Activated CD8-positive, alpha-beta T cell treated with anti-CD3 and anti-CD28 coated beads for 36 hours (primary cell): ENCODE measurements at regions of chr13 and their contacts with region 1.

Region 1: DNA sequence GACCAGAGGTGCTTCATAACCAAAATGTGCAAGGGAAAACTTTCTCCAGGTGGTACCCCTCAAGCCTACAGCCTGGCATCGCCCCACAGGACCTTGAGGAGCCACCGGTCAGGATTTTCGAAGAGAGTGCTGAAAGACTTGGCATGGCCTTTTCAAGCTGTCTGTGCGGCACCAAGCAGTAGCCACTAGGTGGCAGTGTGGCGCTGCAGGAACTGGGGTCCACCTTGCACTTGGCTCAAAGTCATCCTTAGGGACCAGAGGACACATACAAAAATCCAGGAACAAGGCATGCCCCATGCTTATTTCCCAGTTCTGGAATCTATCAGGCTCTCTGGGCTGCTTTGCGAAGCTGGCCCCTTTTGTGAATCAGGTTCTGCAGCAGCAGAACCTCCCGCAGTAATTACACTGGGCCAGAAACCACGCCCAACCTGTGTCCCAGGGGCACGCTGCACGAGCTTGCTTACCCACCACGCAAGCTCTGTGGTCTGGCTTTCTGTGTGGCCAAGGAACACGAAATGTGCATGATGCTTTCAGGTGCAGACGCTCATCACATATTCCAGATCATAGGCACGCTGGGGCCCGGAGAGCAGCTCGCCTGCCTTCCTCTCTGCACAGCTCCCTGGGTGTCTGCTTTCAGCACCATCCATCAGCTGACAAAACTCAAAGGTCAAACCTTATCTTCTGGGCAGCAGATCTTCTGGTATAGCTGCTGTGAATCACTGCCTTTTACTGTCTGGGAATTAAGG is 87.2 kb downstream of the SLC7A1 start:
- DNase-seq: peak; percentile 83
- ATAC-seq: peak; percentile 78
- H3K4me3 Mint-ChIP-seq: no peak overlapping the region
- H3K27ac Mint-ChIP-seq: no peak overlapping the region
- H3K4me1 Mint-ChIP-seq: no peaks in the 10 kb centered on the region
- H3K27me3 Mint-ChIP-seq: peaks cover 2% of the 10 kb centered on the region
- CTCF ChIP-seq: peak; percentile 92

Region 2: GRCh38 chr13:29496240-29496712 is 12.0 kb before region 1 on chr13:
- CTCF ChIA-PET with region 1: interaction called, 42 read pairs
- POLR2A ChIA-PET with region 1: interaction called, 3 read pairs
- intact Hi-C with region 1: no loop called
- DNase-seq: no peak
- ATAC-seq: peak; percentile 30
- H3K4me3 Mint-ChIP-seq: no peak overlapping the region
- H3K27ac Mint-ChIP-seq: no peak overlapping the region
- H3K4me1 Mint-ChIP-seq: peaks cover 3% of the 10 kb centered on the region
- H3K27me3 Mint-ChIP-seq: peaks cover 13% of the 10 kb centered on the region
- CTCF ChIP-seq: no peak

Region 3: DNA sequence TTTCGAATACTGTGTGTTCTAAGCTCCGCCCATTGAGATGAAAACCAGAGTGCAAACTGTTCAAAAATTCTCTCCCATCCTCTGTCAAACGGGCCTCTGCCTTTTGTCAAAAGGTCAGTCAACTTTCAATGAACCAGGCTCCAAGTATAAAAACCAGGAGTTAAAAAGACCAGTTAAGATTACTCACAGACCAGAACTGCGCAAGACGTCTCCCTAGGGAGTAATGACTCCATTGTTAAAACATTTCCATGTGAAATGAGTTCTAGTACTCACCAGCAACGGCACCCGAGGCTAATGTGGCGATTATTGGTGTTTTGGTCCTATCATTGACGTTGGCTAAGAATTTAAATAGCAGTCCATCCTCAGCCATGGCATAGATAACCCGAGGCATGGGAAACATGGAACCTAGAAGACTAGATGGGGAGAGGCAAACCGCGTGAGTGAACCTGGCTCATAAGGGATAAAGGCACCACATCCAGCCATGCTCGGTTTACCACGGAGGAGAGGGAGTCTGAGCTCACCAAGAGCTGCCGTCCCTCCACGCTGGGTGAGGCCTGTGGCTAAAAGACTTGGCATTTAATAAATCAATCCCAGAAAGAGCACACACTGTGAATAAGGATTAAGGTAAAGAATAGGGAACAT is 13.9 kb after region 1 on chr13:
- CTCF ChIA-PET with region 1: interaction called, 34 read pairs
- POLR2A ChIA-PET with region 1: no interaction called
- intact Hi-C with region 1: no loop called
- DNase-seq: no peak
- ATAC-seq: no peak
- H3K4me3 Mint-ChIP-seq: no peak overlapping the region
- H3K27ac Mint-ChIP-seq: no peak overlapping the region
- H3K4me1 Mint-ChIP-seq: no peaks in the 10 kb centered on the region
- H3K27me3 Mint-ChIP-seq: no peaks in the 10 kb centered on the region
- CTCF ChIP-seq: no peak

Region 4: DNA sequence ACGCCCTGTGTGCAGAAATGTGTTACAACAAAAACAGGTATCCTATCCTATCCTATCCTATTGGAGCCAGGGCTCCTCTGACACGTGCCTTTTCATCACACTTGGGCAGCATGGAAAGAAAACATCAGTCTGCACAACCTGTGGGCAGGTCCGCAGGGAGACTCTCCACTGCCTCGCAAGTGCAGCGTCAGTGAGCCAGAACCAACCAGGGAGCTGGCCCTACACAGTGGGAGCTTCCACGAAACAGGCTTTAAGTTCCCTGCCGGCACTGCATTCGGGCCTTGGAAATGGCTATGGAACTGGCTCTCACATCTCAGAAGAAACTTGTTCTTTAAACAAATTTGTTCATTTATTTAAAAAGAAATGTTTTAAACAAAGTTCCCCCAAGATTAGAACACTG is 37.7 kb after region 1 on chr13:
- CTCF ChIA-PET with region 1: interaction called, 10 read pairs
- POLR2A ChIA-PET with region 1: no interaction called
- intact Hi-C with region 1: no loop called
- DNase-seq: no peak
- ATAC-seq: no peak
- H3K4me3 Mint-ChIP-seq: no peak overlapping the region
- H3K27ac Mint-ChIP-seq: no peak overlapping the region
- H3K4me1 Mint-ChIP-seq: peaks cover 40% of the 10 kb centered on the region
- H3K27me3 Mint-ChIP-seq: no peaks in the 10 kb centered on the region
- CTCF ChIP-seq: no peak

Region 5: DNA sequence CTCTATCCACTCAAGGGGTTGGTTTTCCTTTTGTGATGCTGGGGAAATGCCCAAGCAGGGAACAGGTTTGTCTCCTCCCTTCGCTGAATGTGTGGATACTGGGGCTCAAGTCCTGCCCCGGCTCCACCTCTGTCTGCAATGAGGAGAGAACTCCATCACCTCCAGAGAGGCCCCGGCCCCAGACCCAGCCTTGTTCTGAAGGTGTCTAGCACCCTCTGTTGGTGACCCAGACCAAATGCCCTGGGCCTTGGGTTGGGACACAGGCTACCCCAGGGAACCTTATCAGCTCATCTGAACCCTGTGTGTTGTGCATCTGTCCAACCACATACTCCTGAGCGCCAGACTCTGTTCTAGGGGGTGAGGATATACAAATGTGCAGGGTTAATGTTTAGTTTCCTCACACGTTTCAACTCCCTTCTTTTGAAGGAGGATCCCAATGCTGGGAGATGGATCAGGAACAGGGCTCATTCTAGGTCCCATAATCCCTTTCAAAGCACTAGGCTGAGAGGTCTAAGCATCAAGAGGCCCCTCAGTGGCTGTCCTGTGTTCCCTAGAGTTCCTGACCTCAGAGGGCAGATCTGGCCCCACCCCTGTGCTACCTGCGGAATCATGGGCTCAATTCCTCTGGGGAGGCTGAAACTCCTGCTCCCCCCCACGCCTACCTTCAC is 199.7 kb after region 1 on chr13:
- CTCF ChIA-PET with region 1: interaction called, 37 read pairs
- POLR2A ChIA-PET with region 1: no interaction called
- intact Hi-C with region 1: loop called (anchors 2 kb)
- DNase-seq: peak; percentile 61
- ATAC-seq: peak; percentile 95
- H3K4me3 Mint-ChIP-seq: no peak overlapping the region
- H3K27ac Mint-ChIP-seq: no peak overlapping the region
- H3K4me1 Mint-ChIP-seq: no peaks in the 10 kb centered on the region
- H3K27me3 Mint-ChIP-seq: peaks cover 9% of the 10 kb centered on the region
- CTCF ChIP-seq: peak; percentile 70

Region 6: DNA sequence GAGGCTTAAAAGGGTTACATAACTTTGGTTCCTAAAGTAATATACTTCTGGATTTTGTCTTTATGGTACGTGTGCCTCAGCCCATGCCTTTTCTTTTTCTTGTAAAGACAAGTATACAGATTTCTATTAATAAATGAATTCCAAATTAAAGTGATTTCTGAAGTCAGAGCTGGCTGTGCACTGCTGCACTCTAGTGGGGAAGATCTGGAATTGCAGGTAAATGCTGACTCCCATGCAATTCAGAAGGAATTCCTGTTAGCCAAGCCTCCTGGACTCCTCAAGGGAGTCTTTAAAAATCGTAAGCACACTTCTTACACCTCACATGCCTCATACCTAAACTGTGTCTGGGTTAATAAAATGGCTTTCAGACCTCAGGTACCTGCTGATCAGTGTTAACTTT is 205.5 kb after region 1 on chr13:
- CTCF ChIA-PET with region 1: interaction called, 37 read pairs
- POLR2A ChIA-PET with region 1: no interaction called
- intact Hi-C with region 1: loop called (anchors 2 kb)
- DNase-seq: peak; percentile 7
- ATAC-seq: no peak
- H3K4me3 Mint-ChIP-seq: no peak overlapping the region
- H3K27ac Mint-ChIP-seq: no peak overlapping the region
- H3K4me1 Mint-ChIP-seq: no peaks in the 10 kb centered on the region
- H3K27me3 Mint-ChIP-seq: peaks cover 10% of the 10 kb centered on the region
- CTCF ChIP-seq: peak; percentile 88